PC-3 (cell line): ENCODE measurements at regions of chr2 and their contacts with region 1.

Region 1: GRCh38 chr2:121530212-121530705 is 421 bp upstream of the RNU4ATAC start:
- DNase-seq: peak; percentile 71
- ATAC-seq: peak; percentile 68
- H3K4me3 ChIP-seq: peak overlapping the region; percentile 94
- H3K27ac ChIP-seq: peak overlapping the region; percentile 99
- H3K4me1 ChIP-seq: peaks cover 29% of the 10 kb centered on the region
- H3K27me3 ChIP-seq: no peaks in the 10 kb centered on the region
- CTCF ChIP-seq: no peak

Region 2: GRCh38 chr2:121400201-121400600 is 130.1 kb before region 1 on chr2:
- CTCF ChIA-PET with region 1: no interaction called
- POLR2A ChIA-PET with region 1: no interaction called
- intact Hi-C with region 1: loop called (anchors 1 kb)
- DNase-seq: no peak
- ATAC-seq: no peak
- H3K4me3 ChIP-seq: no peak overlapping the region
- H3K27ac ChIP-seq: no peak overlapping the region
- H3K4me1 ChIP-seq: no peaks in the 10 kb centered on the region
- H3K27me3 ChIP-seq: no peaks in the 10 kb centered on the region
- CTCF ChIP-seq: no peak

Region 3: GRCh38 chr2:121429119-121429903 is 100.9 kb before region 1 on chr2:
- CTCF ChIA-PET with region 1: no interaction called
- POLR2A ChIA-PET with region 1: no interaction called
- intact Hi-C with region 1: no loop called
- DNase-seq: no peak
- ATAC-seq: no peak
- H3K4me3 ChIP-seq: no peak overlapping the region
- H3K27ac ChIP-seq: no peak overlapping the region
- H3K4me1 ChIP-seq: no peaks in the 10 kb centered on the region
- H3K27me3 ChIP-seq: no peaks in the 10 kb centered on the region
- CTCF ChIP-seq: no peak

Region 4: DNA sequence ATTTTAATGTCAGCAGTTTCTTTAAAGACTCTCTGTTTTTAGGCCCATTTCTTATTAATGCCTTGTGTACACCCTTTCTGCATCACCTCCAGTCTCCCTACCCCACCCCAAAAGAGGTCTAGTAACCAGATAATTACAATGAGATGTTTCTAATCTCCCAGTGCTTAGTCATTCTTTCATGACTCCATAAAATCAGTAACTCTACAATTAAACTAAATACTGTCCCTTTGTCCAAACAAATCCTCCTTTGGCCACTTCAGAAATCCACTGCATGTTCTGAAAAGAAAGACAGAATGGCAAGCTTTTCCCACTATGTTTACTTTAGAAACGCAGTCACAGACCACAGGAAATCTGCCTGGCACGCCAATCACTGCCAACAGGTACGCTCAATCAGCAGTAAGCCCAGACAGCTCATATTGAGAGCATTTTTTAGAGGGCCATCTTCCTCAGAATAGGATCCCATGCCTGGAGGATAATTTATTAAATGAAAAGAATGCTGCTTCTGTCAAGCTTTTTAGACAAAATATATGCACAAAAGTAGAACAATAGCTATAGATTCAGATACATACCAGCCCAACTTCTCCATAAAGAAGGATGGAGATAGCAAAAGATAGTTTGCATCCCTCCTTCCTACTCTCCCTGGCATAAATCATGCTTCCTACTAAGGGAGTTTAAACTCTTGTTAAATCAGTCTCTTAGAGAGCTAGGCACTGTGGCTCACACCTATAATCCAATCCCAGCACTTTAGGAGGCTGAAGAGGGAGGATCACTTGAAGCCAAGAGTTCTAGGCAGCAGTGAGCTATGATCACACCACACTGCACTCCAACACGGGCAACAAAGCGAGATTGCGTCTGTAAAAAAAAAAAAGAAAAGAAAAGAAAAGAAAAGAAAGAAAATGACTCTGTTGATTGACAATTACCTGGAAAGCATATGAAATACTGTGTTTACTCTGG is 104.4 kb after region 1 on chr2:
- CTCF ChIA-PET with region 1: interaction called, 5 read pairs
- POLR2A ChIA-PET with region 1: interaction called, 4 read pairs
- intact Hi-C with region 1: loop called (anchors 1 kb)
- DNase-seq: peak; percentile 95
- ATAC-seq: peak; percentile 94
- H3K4me3 ChIP-seq: peak overlapping the region; percentile 25; the same call in 1 of the 2 replicates
- H3K27ac ChIP-seq: peak overlapping the region; percentile 97
- H3K4me1 ChIP-seq: peaks cover 27% of the 10 kb centered on the region
- H3K27me3 ChIP-seq: no peaks in the 10 kb centered on the region
- CTCF ChIP-seq: no peak

Region 5: GRCh38 chr2:121722479-121722878 is 192.2 kb after region 1 on chr2:
- CTCF ChIA-PET with region 1: interaction called, 7 read pairs
- POLR2A ChIA-PET with region 1: no interaction called
- intact Hi-C with region 1: loop called (anchors 1 kb)
- DNase-seq: peak; percentile 67
- ATAC-seq: peak; percentile 73
- H3K4me3 ChIP-seq: peak overlapping the region; percentile 39
- H3K27ac ChIP-seq: peak overlapping the region; percentile 86
- H3K4me1 ChIP-seq: peaks cover 16% of the 10 kb centered on the region
- H3K27me3 ChIP-seq: no peaks in the 10 kb centered on the region
- CTCF ChIP-seq: no peak

Region 6: GRCh38 chr2:121755236-121756111 is 225.2 kb after region 1 on chr2 and contains the start of gene TSN:
- CTCF ChIA-PET with region 1: no interaction called
- POLR2A ChIA-PET with region 1: no interaction called
- intact Hi-C with region 1: loop called (anchors 1 kb)
- DNase-seq: peak; percentile 98
- ATAC-seq: peak; percentile 98
- H3K4me3 ChIP-seq: peak within 1 kb of the TSS; percentile 97
- H3K27ac ChIP-seq: peak within 1 kb of the TSS; percentile 44
- H3K4me1 ChIP-seq: peaks cover 12% of the 10 kb centered on the region; the same call in 1 of the 2 replicates
- H3K27me3 ChIP-seq: no peaks in the 10 kb centered on the region
- CTCF ChIP-seq: no peak
- total RNA-seq, gene TSN: 55.0 and 83.0 TPM in 2 replicates